Mammary epithelial cell (primary cell): ENCODE measurements at regions of chr2 and their contacts with region 1.

Region 1: DNA sequence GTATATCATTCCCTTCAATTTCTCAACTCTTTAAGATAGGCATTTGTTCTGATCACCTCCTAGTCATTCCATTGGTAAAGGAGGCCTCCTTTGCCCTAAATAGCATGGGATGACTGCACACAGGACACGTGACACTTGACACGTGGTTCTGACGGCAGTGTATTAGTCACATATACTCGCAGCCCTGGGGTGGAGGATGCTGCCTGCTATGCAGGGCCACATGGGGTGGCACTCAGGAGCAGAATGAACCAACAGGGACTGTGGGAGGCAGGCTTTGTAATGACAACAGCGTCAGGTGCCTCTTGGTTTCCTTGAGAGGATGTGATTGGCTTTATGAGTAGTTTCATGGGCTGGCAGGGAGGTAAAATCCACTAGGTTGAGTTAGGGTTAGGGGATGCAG is 9.3 kb upstream of the KCNS3 start:
- DNase-seq: peak; percentile 3
- H3K4me3 ChIP-seq: no peak overlapping the region
- H3K27ac ChIP-seq: no peak overlapping the region
- H3K4me1 ChIP-seq: no peaks in the 10 kb centered on the region
- H3K27me3 ChIP-seq: no peaks in the 10 kb centered on the region
- CTCF ChIP-seq: no peak

Region 2: DNA sequence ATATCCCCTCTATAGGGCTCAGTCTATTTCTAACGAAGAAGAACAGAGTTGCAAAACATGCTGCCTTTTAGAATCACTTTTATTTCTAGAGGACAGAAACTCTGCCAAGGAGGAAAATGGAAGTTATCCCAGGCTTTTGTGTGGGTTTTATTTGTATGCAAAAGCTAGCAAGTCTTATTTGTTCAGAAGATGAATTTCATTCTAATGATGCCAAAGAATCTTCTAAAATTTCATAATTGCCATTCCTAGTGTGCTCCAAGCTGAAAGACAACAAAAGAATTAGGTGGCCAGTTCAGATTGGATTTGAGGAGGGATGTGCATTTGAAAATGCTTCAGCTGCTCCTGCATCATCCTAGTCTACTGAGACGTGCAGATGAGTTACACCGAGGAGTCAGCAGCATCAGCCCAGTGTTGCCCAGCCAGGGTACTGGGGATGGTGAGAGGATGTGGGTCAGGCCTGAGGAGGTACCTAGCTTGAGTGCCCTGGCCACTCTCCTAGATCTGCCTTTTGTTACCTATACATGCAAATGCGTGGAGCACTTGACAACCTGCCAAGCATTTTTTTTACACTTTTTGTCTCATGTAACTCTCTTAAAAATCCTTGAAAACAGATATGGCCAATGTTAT is 89.5 kb after region 1 on chr2:
- CTCF ChIA-PET with region 1: no interaction called
- dilution Hi-C with region 1: loop called (anchors 5 kb)
- in situ Hi-C with region 1: no loop called
- intact Hi-C with region 1: no loop called
- DNase-seq: no peak
- H3K4me3 ChIP-seq: no peak overlapping the region
- H3K27ac ChIP-seq: no peak overlapping the region
- H3K4me1 ChIP-seq: no peaks in the 10 kb centered on the region
- H3K27me3 ChIP-seq: peaks cover 4% of the 10 kb centered on the region
- CTCF ChIP-seq: no peak